MCF 10A (cell line): ENCODE measurements at regions of chr7 and their contacts with region 1.

Region 1: GRCh38 chr7:143299840-143300239 is 11.7 kb downstream of the CASP2 start:
- DNase-seq: peak; percentile 45
- H3K4me3 Mint-ChIP-seq: no peak overlapping the region
- H3K27ac Mint-ChIP-seq: no peak overlapping the region
- H3K4me1 Mint-ChIP-seq: peaks cover 13% of the 10 kb centered on the region
- H3K27me3 Mint-ChIP-seq: no peaks in the 10 kb centered on the region
- CTCF ChIP-seq: peak; percentile 43

Region 2: GRCh38 chr7:143147072-143147694 is 152.7 kb before region 1 on chr7:
- CTCF ChIA-PET with region 1: no interaction called
- POLR2A ChIA-PET with region 1: no interaction called
- intact Hi-C with region 1: no loop called
- DNase-seq: no peak
- H3K4me3 Mint-ChIP-seq: no peak overlapping the region
- H3K27ac Mint-ChIP-seq: no peak overlapping the region
- H3K4me1 Mint-ChIP-seq: no peaks in the 10 kb centered on the region
- H3K27me3 Mint-ChIP-seq: no peaks in the 10 kb centered on the region
- CTCF ChIP-seq: no peak

Region 3: GRCh38 chr7:143181349-143181748 is 118.5 kb before region 1 on chr7:
- CTCF ChIA-PET with region 1: no interaction called
- POLR2A ChIA-PET with region 1: no interaction called
- intact Hi-C with region 1: no loop called
- DNase-seq: no peak
- H3K4me3 Mint-ChIP-seq: no peak overlapping the region
- H3K27ac Mint-ChIP-seq: no peak overlapping the region
- H3K4me1 Mint-ChIP-seq: no peaks in the 10 kb centered on the region
- H3K27me3 Mint-ChIP-seq: peaks cover 31% of the 10 kb centered on the region
- CTCF ChIP-seq: no peak

Region 4: DNA sequence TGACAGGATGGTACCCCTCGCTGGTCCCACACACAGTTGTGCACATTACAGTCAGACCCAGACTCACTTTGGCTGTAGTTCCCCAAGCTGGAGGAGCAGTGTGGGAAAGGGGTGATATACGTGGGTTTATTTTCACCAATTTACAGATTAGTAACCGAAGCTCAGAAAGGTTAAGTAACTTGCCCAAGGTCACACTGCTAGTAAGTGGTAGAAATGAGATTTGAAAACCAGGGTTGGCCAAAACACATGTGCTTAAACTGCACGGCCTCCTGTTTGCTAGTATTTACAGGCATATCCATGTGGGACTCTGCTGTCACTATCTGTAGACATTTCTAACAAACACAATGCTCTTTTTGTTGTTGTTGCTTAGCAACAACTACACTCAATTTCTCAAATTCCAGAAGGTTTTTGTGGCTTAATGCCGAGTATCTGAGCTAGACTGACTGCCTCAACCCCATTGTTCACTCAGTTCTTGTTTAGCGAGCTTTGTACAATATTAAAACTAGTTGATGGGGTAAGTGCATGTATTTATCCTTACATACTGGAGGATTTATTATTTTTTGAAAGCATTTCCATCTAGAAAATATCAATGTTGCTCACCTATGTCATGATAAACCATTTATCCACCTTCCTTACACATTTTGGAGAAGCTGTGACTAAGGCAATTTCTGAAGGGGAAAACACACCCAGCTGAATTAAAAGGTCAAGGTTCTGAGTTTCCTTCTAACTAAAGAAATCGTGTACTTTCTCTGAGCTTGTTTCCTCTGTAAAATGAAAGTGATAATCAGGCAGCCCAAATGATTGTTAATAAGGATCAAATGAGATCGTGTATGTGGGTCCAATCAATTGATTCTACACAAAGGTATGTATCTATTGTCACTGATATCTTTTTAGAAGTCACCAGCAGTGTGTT is 20.4 kb before region 1 on chr7:
- CTCF ChIA-PET with region 1: interaction called, 10 read pairs
- POLR2A ChIA-PET with region 1: no interaction called
- intact Hi-C with region 1: no loop called
- DNase-seq: peak; percentile 20
- H3K4me3 Mint-ChIP-seq: no peak overlapping the region
- H3K27ac Mint-ChIP-seq: no peak overlapping the region
- H3K4me1 Mint-ChIP-seq: peaks cover 7% of the 10 kb centered on the region
- H3K27me3 Mint-ChIP-seq: no peaks in the 10 kb centered on the region
- CTCF ChIP-seq: no peak

Region 5: DNA sequence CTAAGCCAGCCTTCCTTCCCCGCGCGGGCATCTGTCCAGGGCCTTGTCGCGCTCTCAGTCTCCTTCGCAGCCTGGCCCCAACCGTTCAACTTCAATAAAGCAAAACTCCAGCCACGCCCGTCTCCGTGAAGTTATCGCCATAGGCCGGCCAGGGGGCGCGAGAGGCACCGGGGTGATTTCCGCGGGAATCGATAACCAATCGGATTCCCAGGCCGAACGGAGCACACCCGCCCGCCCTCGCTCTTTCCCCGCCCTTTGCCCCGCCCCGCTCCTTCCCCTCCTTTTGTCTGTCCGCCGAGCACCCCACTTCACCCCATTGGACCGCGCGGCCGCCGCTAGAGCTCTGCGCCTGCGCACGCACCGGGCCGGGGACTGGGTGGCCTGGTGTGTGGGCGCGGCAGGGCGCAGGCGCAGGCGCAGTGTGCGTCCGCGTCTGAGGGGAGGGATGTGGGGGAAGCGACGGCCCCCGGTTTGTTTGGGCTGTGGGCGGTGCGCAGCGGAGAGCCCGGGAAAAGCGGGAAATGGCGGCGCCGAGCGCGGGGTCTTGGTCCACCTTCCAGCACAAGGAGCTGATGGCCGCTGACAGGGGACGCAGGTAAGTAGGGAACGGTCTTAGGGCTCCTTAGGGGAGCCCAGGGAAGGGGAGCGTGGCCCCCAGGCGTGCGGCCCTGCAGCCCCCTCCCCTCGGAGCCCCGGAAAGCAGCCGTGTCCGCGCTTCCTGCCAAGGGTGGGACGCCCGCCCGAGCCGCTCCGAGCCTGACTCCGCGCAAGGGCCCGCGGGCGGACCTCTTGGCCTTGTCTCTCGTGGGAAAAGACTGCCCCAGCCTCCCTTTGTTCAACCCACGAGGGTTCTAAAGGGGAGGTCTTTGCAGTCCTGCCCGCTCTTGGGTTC is 11.7 kb before region 1 on chr7 and contains the start of gene CASP2:
- CTCF ChIA-PET with region 1: interaction called, 22 read pairs
- POLR2A ChIA-PET with region 1: interaction called, 6 read pairs
- intact Hi-C with region 1: no loop called
- DNase-seq: peak; percentile 97
- H3K4me3 Mint-ChIP-seq: peak within 1 kb of the TSS; percentile 98
- H3K27ac Mint-ChIP-seq: peak within 1 kb of the TSS; percentile 68
- H3K4me1 Mint-ChIP-seq: peaks cover 42% of the 10 kb centered on the region
- H3K27me3 Mint-ChIP-seq: no peaks in the 10 kb centered on the region
- CTCF ChIP-seq: no peak
- total RNA-seq, gene CASP2: 15.1 and 17.4 TPM in 2 replicates

Region 6: DNA sequence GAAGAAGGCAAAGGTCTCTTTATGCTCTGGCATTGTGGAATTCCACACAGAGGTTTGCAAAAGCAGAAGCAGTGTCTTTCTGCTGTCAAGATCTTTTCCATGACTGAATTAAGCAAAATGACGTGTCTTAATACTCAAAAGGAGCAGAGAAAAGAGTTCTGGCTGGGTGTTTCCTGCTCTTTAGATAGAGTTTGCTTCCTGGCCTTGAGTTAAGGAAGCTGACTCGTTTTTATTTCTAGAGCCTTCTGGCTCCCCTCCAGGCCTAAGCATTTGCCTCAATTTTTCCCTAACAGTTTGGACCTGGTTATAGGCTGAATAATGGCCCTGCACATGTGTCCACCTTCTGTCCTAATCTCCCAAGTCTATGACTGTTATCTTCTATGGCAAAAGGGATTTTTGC is 199.4 kb after region 1 on chr7:
- CTCF ChIA-PET with region 1: no interaction called
- POLR2A ChIA-PET with region 1: no interaction called
- intact Hi-C with region 1: no loop called
- DNase-seq: no peak
- H3K4me3 Mint-ChIP-seq: no peak overlapping the region
- H3K27ac Mint-ChIP-seq: no peak overlapping the region
- H3K4me1 Mint-ChIP-seq: no peaks in the 10 kb centered on the region
- H3K27me3 Mint-ChIP-seq: no peaks in the 10 kb centered on the region
- CTCF ChIP-seq: no peak